Activated CD4-positive, alpha-beta T cell treated with anti-CD3 and anti-CD28 coated beads for 36 hours (primary cell): ENCODE measurements at regions of chr10 and their contacts with region 1.

Region 1: GRCh38 chr10:121900443-121901174 is 27.2 kb downstream of the ATE1 start:
- DNase-seq: no peak
- ATAC-seq: peak; percentile 72
- H3K4me3 Mint-ChIP-seq: no peak overlapping the region
- H3K27ac Mint-ChIP-seq: no peak overlapping the region
- H3K4me1 Mint-ChIP-seq: no peaks in the 10 kb centered on the region
- H3K27me3 Mint-ChIP-seq: no peaks in the 10 kb centered on the region

Region 2: DNA sequence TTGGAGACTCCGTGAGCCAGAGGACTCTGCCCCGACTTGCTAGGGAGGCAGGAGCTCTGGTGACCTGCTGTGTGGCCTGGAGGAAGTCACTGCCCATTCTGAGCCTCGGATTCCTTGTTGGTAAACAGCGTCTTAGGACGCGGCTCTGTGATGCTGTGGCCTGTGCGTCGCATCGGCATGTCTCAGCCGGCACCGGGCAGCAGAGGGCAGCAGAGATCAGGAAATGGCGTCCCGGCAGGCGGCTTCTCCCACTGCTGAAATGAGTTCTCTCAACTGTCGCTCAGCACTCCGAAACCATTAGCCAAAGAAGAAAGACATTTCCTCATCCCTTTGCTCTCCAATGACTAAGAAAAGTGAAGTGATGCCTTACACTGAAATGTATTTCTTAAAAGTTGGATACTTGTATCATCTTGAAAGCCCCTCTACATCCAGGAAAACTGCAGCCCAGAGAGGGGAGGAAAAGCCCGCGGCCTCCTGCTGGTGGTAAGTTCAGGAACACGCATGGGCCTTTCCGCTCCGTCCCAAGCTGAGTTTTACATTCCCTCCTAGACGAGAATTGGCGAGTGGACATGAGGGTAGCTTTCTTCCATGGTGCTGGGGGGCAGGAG is 957.7 kb before region 1 on chr10:
- CTCF ChIA-PET with region 1: interaction called, 3 read pairs
- POLR2A ChIA-PET with region 1: no interaction called
- intact Hi-C with region 1: loop called (anchors 1 to 2 kb)
- DNase-seq: peak; percentile 89
- ATAC-seq: peak; percentile 97
- H3K4me3 Mint-ChIP-seq: no peak overlapping the region
- H3K27ac Mint-ChIP-seq: no peak overlapping the region
- H3K4me1 Mint-ChIP-seq: peaks cover 5% of the 10 kb centered on the region
- H3K27me3 Mint-ChIP-seq: peaks cover 14% of the 10 kb centered on the region

Region 3: DNA sequence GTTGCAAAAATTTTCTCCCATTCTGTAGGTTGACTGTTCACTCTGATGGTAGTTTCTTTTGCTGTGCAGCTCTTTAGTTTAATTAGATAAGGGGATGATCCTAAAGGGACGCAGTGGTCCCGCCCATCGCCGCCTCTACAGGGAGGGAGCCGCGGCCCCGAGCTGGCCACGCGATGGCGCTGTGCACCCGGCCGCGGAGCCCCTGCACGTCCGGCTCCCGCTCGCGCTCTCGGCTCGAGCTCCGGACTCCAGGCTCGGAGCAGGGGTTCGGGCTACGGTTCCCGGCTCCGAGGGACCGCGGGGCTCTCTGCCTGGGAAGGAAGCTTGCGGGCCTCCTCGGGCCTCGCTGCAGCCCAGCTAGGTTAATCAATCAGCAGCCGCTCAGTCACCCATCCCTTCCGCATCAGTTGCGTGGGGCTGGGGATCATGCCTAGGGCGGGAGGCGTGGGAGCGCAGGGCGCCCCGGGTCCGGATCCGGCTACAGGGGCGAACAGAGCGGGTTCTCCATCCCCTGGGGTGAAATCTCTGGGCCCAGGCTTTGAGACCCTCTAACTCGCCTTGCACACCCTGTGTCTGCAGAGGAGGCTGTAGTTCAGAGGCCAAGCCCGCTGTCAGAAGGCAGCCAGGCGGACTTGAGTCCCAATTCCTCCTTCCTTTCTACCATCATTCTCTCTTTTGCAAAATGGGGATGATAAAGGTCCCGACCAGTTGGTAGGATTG is 951.6 kb before region 1 on chr10:
- CTCF ChIA-PET with region 1: interaction called, 11 read pairs
- POLR2A ChIA-PET with region 1: no interaction called
- intact Hi-C with region 1: no loop called
- DNase-seq: peak; percentile 82
- ATAC-seq: peak; percentile 98
- H3K4me3 Mint-ChIP-seq: peak overlapping the region; percentile 12
- H3K27ac Mint-ChIP-seq: no peak overlapping the region
- H3K4me1 Mint-ChIP-seq: no peaks in the 10 kb centered on the region
- H3K27me3 Mint-ChIP-seq: peaks cover 32% of the 10 kb centered on the region

Region 4: DNA sequence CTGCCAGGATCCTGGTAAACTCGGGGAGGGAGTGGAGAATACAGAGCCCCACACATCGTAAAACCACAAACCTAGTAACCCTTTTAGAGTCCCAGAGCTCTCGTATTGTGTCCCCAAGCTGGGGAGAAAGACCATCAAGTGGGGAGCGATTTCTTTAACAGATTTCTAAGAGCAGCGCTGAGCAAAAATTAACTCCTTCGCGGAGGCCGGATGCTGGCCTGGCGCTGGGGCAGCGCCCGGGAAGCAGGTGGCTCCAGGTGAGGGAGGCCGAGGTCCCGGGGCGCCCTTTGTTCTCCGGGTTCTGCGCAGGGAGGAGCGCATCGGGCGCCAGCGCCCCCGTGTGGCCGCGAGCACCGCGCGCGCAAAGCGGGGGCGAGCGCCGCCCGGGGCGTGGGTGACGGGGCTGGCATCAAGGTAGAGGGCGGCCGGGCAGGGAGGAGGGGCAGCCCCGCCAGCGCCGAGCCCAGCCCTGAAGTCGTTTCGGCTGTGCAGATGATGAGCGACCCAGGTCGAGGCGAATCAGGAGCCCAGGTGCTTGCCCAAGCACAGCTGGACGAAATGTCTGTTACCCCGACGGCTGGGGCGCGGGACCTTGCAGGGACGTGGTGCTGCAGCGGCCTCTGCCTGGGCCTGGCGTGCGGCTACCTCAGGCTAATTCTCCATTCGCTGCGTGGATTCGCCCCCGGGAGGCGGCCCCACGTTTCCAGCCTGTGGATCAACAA is 292.0 kb before region 1 on chr10:
- CTCF ChIA-PET with region 1: no interaction called
- POLR2A ChIA-PET with region 1: no interaction called
- intact Hi-C with region 1: loop called in 1 of 2 experiments (anchors 5 kb)
- DNase-seq: peak; percentile 67
- ATAC-seq: peak; percentile 84
- H3K4me3 Mint-ChIP-seq: no peak overlapping the region
- H3K27ac Mint-ChIP-seq: no peak overlapping the region
- H3K4me1 Mint-ChIP-seq: no peaks in the 10 kb centered on the region
- H3K27me3 Mint-ChIP-seq: peaks cover 27% of the 10 kb centered on the region

Region 5: GRCh38 chr10:121823993-121824463 is 76.6 kb before region 1 on chr10:
- CTCF ChIA-PET with region 1: interaction called, 6 read pairs
- POLR2A ChIA-PET with region 1: no interaction called
- intact Hi-C with region 1: loop called in 1 of 2 experiments (anchors 1 kb)
- DNase-seq: no peak
- ATAC-seq: peak; percentile 46
- H3K4me3 Mint-ChIP-seq: no peak overlapping the region
- H3K27ac Mint-ChIP-seq: no peak overlapping the region
- H3K4me1 Mint-ChIP-seq: peaks cover 4% of the 10 kb centered on the region
- H3K27me3 Mint-ChIP-seq: no peaks in the 10 kb centered on the region

Region 6: GRCh38 chr10:121880895-121881294 is 19.7 kb before region 1 on chr10:
- CTCF ChIA-PET with region 1: interaction called, 14 read pairs
- POLR2A ChIA-PET with region 1: no interaction called
- intact Hi-C with region 1: no loop called
- DNase-seq: no peak
- ATAC-seq: no peak
- H3K4me3 Mint-ChIP-seq: no peak overlapping the region
- H3K27ac Mint-ChIP-seq: no peak overlapping the region
- H3K4me1 Mint-ChIP-seq: peaks cover 7% of the 10 kb centered on the region
- H3K27me3 Mint-ChIP-seq: no peaks in the 10 kb centered on the region

Region 7: GRCh38 chr10:121886997-121887622 is 13.5 kb before region 1 on chr10:
- CTCF ChIA-PET with region 1: interaction called, 10 read pairs
- POLR2A ChIA-PET with region 1: no interaction called
- intact Hi-C with region 1: no loop called
- DNase-seq: peak; percentile 77
- ATAC-seq: peak; percentile 80
- H3K4me3 Mint-ChIP-seq: no peak overlapping the region
- H3K27ac Mint-ChIP-seq: no peak overlapping the region
- H3K4me1 Mint-ChIP-seq: no peaks in the 10 kb centered on the region
- H3K27me3 Mint-ChIP-seq: no peaks in the 10 kb centered on the region

Region 8: DNA sequence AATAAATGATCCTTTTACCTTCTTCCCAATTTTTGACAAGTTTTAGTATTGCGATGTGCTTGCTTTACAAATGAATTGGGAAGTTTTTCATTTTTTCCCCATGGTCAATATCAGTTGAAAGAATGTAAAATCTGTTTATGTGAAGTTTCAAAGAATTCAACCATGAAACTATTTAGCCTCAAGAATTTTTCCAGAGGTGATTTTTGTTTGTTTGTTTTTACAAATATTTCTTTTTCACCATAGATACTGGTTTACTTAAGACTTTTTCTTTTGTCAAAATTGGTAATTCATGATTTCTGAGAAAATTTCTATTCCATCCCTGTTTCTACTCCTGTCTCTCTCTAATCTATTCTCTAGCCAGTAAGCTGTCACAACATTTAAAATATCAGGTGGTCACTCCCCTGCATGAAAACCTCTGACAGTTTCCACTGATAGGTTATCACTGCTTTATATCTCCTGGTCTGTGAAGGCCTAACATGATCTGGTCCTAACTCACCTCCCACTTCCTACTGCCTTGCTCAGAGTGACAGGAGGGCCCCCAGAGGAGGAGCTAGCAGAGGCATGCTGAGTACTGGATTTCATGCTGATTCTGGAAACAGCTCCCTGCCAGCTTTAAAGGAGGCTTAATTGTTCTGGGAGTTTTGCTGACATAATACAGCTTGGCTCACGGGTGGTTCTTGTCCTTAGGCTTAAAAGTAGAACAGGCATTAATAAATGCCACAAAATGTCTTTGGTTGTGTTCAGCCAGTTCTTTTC is 546.2 kb after region 1 on chr10:
- CTCF ChIA-PET with region 1: no interaction called
- POLR2A ChIA-PET with region 1: no interaction called
- intact Hi-C with region 1: no loop called
- DNase-seq: no peak
- ATAC-seq: no peak
- H3K4me3 Mint-ChIP-seq: no peak overlapping the region
- H3K27ac Mint-ChIP-seq: no peak overlapping the region
- H3K4me1 Mint-ChIP-seq: no peaks in the 10 kb centered on the region
- H3K27me3 Mint-ChIP-seq: peaks cover 6% of the 10 kb centered on the region